ENCODE measurements at regions of chr5 and their contacts with region 1.

Region 1: DNA sequence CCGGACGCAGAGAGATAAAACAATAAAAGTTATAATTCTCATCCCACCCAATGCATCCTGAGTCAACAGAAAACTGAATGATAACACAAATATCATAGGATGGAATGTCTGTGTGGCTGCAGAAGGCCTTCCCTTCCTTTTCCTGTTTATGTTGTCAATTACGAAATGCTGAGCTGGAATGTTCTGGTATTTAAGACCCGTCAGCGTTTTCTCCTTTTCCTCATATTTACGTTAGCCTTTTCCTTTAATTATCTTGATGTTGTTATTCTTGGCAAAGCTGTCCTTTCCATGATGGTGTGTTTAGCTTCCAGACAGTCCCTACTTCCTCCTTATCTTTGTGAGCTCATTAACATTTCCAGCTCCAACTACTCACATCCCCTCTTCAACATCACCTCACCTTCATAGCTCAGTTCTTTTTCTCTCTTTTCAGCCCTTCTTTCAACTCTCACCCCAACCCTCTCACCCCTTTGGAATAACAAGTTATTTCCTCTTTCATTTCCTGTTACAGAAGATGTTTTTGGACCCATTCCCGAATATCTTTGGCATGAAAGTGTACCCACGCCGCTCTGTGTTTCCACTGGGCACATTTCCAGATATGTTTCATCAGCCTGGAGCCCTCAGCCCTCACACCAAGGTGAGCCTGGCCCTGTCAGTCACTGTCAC is 221.6 kb downstream of the NR2F1-AS1 start:
- DNase-seq: peak; percentile 98
- H3K4me3 ChIP-seq: peak overlapping the region in 2 of 3 experiments; percentile 10 to 40
- H3K27ac ChIP-seq: peak overlapping the region; percentile 91
- H3K4me1 ChIP-seq: peaks cover 49% of the 10 kb centered on the region
- H3K27me3 ChIP-seq: no peaks in the 10 kb centered on the region
- CTCF ChIP-seq: no peak
- POLR2A ChIP-seq: peak; percentile 91

Region 2: DNA sequence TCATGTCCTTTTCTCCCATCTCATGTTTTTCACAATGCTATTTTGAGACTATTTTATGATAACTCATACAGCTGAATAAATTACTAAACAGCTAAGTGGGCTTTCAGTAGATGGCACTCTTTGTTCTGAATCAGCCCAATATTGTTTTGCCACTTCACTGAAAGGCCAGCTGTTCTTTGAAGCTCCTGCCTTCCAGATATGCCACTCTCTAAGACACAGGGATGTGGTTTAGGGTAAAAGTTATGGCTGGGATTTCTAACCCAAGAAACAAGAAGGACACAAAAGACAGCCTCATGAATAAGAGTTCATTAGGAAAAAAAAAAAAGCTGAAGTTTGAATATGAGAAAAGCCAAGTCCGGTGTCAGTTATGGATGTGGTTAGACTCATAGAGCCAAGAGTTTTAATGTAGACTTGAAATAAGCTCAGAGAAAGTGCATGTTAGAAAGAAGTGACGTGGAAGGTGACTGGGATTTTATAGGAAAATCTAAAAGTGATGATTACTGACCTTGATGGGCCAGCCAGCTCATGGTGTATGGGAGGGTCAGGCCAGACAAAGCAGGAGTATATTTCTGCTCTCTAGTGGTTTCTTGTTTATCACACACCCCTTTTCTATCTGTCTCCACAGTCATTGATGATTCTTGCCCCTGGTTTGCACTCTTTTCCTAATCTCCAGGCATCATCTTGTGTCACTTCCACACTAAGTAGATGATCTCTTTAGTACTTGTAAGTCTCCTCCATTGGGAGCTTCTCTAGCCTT is 266.9 kb before region 1 on chr5:
- CTCF ChIA-PET with region 1: interaction called, 19 read pairs
- POLR2A ChIA-PET with region 1: no interaction called
- dilution Hi-C with region 1: no loop called
- intact Hi-C with region 1: loop called (anchors 1 kb)
- DNase-seq: peak; percentile 82
- H3K4me3 ChIP-seq: no peak overlapping the region
- H3K27ac ChIP-seq: no peak overlapping the region
- H3K4me1 ChIP-seq: no peaks in the 10 kb centered on the region
- H3K27me3 ChIP-seq: no peaks in the 10 kb centered on the region
- CTCF ChIP-seq: peak; percentile 13 to 33
- POLR2A ChIP-seq: no peak

Region 3: GRCh38 chr5:93192087-93192486 is 167.3 kb before region 1 on chr5:
- CTCF ChIA-PET with region 1: no interaction called
- POLR2A ChIA-PET with region 1: no interaction called
- dilution Hi-C with region 1: no loop called
- intact Hi-C with region 1: loop called (anchors 1 kb)
- DNase-seq: peak; percentile 73
- H3K4me3 ChIP-seq: no peak overlapping the region
- H3K27ac ChIP-seq: peak overlapping the region; percentile 68
- H3K4me1 ChIP-seq: peaks cover 34% of the 10 kb centered on the region
- H3K27me3 ChIP-seq: no peaks in the 10 kb centered on the region
- CTCF ChIP-seq: no peak
- POLR2A ChIP-seq: no peak

Region 4: DNA sequence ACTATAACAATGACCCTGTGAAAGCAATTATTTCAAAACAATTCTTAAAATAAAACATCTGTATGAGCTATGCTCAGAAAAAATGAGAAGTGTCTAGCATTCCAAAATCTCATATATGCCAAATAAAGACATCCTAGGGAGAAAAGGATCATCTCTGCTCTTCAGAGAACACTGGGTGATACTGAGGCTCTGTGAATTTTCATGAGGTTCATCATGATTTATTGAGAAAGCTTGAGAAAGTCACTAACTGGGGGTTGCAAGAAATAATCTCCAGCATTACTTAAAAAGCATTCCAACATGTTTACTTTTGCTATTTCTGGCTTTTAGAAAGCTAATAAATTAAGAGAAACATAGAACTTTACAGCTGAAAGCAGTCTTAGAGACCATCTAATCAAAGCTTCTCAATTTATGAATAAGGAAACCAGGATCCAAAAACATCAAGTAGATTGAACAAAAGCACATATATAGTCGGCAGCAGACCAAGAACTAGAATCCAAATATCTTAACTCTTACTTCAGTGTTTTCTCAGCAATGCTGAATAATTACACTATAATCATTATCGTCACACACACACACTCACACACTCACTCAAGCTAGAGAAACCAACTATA is 151.2 kb before region 1 on chr5:
- CTCF ChIA-PET with region 1: no interaction called
- POLR2A ChIA-PET with region 1: no interaction called
- dilution Hi-C with region 1: no loop called
- intact Hi-C with region 1: no loop called
- DNase-seq: no peak
- H3K4me3 ChIP-seq: no peak overlapping the region
- H3K27ac ChIP-seq: no peak overlapping the region
- H3K4me1 ChIP-seq: no peaks in the 10 kb centered on the region
- H3K27me3 ChIP-seq: no peaks in the 10 kb centered on the region
- CTCF ChIP-seq: no peak
- POLR2A ChIP-seq: no peak

Region 5: GRCh38 chr5:93311881-93312280 is 47.5 kb before region 1 on chr5:
- CTCF ChIA-PET with region 1: no interaction called
- POLR2A ChIA-PET with region 1: no interaction called
- dilution Hi-C with region 1: no loop called
- intact Hi-C with region 1: no loop called
- DNase-seq: no peak
- H3K4me3 ChIP-seq: no peak overlapping the region
- H3K27ac ChIP-seq: no peak overlapping the region
- H3K4me1 ChIP-seq: no peaks in the 10 kb centered on the region
- H3K27me3 ChIP-seq: no peaks in the 10 kb centered on the region
- CTCF ChIP-seq: no peak
- POLR2A ChIP-seq: no peak

Region 6: GRCh38 chr5:93421987-93422401 is 62.6 kb after region 1 on chr5:
- CTCF ChIA-PET with region 1: no interaction called
- POLR2A ChIA-PET with region 1: no interaction called
- dilution Hi-C with region 1: no loop called
- intact Hi-C with region 1: loop called (anchors 5 kb)
- DNase-seq: peak; percentile 12
- H3K4me3 ChIP-seq: no peak overlapping the region
- H3K27ac ChIP-seq: no peak overlapping the region
- H3K4me1 ChIP-seq: peaks cover 16% of the 10 kb centered on the region
- H3K27me3 ChIP-seq: no peaks in the 10 kb centered on the region
- CTCF ChIP-seq: no peak
- POLR2A ChIP-seq: no peak

Region 7: GRCh38 chr5:93789173-93790070 is 430.0 kb after region 1 on chr5:
- CTCF ChIA-PET with region 1: interaction called, 4 read pairs
- POLR2A ChIA-PET with region 1: no interaction called
- dilution Hi-C with region 1: no loop called
- intact Hi-C with region 1: loop called (anchors 5 kb)
- DNase-seq: peak; percentile 56
- H3K4me3 ChIP-seq: no peak overlapping the region
- H3K27ac ChIP-seq: no peak overlapping the region
- H3K4me1 ChIP-seq: peaks cover 10% of the 10 kb centered on the region
- H3K27me3 ChIP-seq: no peaks in the 10 kb centered on the region
- CTCF ChIP-seq: no peak
- POLR2A ChIP-seq: no peak

Measured in endothelial cell of umbilical vein (primary cell).